CD4-positive, alpha-beta memory T cell (primary cell): ENCODE measurements at regions of chr17 and their contacts with region 1.

Region 1: GRCh38 chr17:50853015-50853615 is 13.0 kb downstream of the TOB1 start:
- DNase-seq: no peak
- H3K4me3 ChIP-seq: no peak overlapping the region
- H3K4me3 Mint-ChIP-seq: peak overlapping the region in 6 of 8 donors; percentile 70 to 87 (median 84)
- H3K27ac ChIP-seq: no peak overlapping the region
- H3K27ac Mint-ChIP-seq: peak overlapping the region; percentile 47 to 97 (median 92)
- H3K4me1 ChIP-seq: peaks cover 15% of the 10 kb centered on the region
- H3K4me1 Mint-ChIP-seq: peaks cover 12 to 20% (median 15%) of the 10 kb centered on the region in 4 donors
- H3K27me3 ChIP-seq: no peaks in the 10 kb centered on the region
- H3K27me3 Mint-ChIP-seq: no peaks in the 10 kb centered on the region

Region 2: DNA sequence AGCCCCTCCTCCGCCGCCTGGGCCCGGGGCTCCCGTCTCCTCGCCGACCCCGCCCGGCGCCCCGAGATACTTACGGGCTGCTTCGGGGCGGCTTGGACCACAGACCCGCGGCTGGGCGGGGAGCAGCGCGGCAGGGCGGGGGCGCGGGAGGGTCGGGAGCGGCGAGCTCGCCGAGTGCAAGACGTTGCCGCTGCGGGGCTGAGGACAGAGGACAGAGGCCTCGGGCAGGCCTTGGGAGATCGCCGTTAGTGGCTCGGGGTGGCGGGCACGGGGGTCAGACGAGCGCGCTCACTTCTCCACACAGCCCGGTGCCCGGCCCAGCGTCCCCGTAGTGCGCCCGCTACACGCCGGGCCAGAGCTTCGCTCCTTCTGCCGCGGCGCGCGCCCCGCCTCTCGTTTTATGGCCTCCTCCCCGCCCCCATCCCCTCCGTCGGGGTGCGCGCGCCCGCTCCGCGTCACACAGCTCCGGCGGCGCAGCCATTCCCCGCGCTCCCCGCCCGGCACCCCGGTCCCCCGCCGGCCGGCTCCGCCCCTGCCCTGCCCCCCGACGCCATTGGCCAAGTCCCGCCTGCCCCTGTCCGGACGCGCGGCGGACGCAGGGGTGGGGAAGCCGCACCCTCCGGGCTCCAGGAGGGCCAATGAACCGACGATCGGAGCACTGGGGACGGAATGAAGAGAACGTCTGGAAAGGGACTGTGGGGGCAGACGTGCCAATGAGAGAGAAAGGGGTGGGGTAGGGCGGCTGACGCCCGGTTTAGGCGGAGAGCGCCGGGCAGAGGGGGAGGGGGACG is 13.1 kb after region 1 on chr17 and contains the start of gene TOB1:
- CTCF ChIA-PET with region 1: interaction called, 102 read pairs
- POLR2A ChIA-PET with region 1: interaction called, 218 read pairs
- intact Hi-C with region 1: loop called (anchors 1 kb)
- DNase-seq: peak; percentile 94 to 97 (median 95)
- H3K4me3 ChIP-seq: peak within 1 kb of the TSS; percentile 87 to 92
- H3K4me3 Mint-ChIP-seq: peak within 1 kb of the TSS; percentile 97 to 100 (median 98)
- H3K27ac ChIP-seq: peak within 1 kb of the TSS; percentile 97
- H3K27ac Mint-ChIP-seq: peak within 1 kb of the TSS; percentile 96 to 100 (median 99)
- H3K4me1 ChIP-seq: peaks cover 67% of the 10 kb centered on the region
- H3K4me1 Mint-ChIP-seq: peaks cover 38 to 73% (median 51%) of the 10 kb centered on the region in 4 donors
- H3K27me3 ChIP-seq: no peaks in the 10 kb centered on the region
- H3K27me3 Mint-ChIP-seq: no peaks in the 10 kb centered on the region
- total RNA-seq, gene TOB1: 93.7 to 104 TPM

Region 3: DNA sequence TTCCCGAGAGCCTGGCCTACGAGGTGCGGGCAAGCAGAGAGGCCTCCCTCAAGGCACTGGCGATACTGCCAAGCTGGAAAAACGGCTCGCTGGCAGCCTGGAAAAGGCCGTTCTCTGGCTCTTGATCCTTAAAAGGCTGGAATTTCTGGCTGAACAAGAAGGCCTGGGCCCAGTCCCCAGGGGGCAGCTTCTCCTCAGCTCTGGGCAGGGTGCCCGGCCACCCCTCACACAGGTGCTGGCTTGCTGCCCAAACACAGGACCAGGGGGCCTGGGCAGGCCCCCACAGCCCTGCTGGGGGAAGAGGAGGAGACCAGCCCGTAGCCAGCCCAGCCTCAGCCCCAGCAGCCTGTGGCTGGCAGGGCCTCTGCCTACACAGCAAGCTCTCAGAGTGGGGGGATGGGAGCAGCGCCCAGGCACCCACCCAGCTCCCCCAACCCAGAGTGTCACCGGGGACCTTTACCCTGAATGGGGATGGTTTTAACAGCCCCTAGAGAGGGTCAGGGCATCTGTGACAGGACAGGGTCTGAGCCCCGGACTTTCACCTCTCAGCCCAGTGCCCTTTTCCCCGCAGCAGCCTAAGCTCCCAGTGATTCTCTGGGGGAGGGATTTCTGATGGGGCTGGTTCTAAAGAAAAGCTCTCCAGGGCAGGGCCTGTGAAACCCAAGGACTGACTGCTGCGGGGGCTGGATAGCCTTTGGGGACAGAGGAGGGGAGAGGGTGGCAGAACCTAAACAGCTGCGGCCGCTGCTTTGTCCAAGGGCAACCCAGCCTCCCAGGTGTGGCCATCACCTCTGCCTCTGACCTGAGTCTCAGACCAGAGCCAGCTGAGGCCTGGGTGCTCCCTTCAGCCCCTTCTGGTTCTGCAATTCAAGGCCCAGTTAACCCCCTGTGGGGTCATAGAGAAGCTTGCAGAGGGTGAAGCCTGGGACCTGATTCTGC is 51.7 kb after region 1 on chr17:
- CTCF ChIA-PET with region 1: interaction called, 14 read pairs
- POLR2A ChIA-PET with region 1: interaction called, 688 read pairs
- intact Hi-C with region 1: no loop called
- DNase-seq: no peak
- H3K4me3 ChIP-seq: no peak overlapping the region
- H3K4me3 Mint-ChIP-seq: peak overlapping the region in 4 of 8 donors; percentile 22 to 79 (median 65)
- H3K27ac ChIP-seq: peak overlapping the region; percentile 66
- H3K27ac Mint-ChIP-seq: peak overlapping the region; percentile 71 to 97 (median 96)
- H3K4me1 ChIP-seq: peaks cover 66% of the 10 kb centered on the region
- H3K4me1 Mint-ChIP-seq: peaks cover 39 to 72% (median 51%) of the 10 kb centered on the region in 4 donors
- H3K27me3 ChIP-seq: no peaks in the 10 kb centered on the region
- H3K27me3 Mint-ChIP-seq: no peaks in the 10 kb centered on the region

Region 4: GRCh38 chr17:50925296-50925891 is 72.3 kb after region 1 on chr17:
- CTCF ChIA-PET with region 1: interaction called, 14 read pairs
- POLR2A ChIA-PET with region 1: interaction called, 688 read pairs
- intact Hi-C with region 1: no loop called
- DNase-seq: no peak
- H3K4me3 ChIP-seq: no peak overlapping the region
- H3K4me3 Mint-ChIP-seq: no peak overlapping the region
- H3K27ac ChIP-seq: no peak overlapping the region
- H3K27ac Mint-ChIP-seq: peak overlapping the region in 4 of 7 donors; percentile 42 to 73 (median 62)
- H3K4me1 ChIP-seq: peaks cover 27% of the 10 kb centered on the region
- H3K4me1 Mint-ChIP-seq: peaks cover 11 to 66% (median 34%) of the 10 kb centered on the region in 4 donors
- H3K27me3 ChIP-seq: no peaks in the 10 kb centered on the region
- H3K27me3 Mint-ChIP-seq: no peaks in the 10 kb centered on the region

Region 5: DNA sequence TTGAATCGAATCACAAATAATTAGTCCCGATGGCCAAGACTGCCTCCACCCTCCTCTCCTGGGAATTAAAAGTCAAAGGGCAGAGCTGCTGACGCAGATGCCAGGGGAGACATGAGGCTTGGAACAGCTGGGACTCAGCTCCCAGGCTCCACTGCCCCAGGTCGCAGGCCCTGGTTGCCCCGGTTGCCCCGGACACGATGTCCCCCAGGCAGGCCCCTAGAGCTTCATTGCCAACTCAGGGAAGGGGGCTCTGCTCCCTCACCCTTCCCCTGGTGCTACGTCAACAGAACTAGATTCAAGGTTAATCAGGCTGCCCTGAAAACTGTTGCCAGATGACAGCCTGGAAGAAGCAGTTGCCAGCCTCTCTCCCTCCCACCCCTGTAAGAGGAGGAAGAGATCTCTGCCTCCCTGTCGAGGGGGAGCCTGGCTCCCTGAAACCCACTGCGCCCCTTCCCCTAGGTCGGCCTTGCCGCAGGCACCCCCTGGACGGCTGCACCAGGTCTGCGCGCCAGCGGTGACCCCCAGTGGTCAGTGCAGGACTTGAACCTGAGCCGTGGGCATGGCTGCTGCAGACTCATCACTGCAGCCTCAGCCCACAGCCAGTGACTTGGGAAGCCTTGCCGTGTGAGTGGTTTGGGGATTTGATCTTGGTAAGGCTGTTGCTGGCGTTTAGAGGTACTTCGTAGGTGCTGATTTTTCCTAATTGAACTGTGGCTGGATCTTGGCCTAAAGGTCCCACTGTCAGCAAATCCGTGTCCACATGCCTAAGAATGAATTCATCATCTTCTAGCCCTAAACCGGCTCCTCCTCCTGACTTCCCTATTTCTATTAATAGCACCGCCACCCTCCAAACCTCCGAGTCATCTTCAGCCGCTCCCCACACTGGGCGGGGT is 97.1 kb after region 1 on chr17:
- CTCF ChIA-PET with region 1: interaction called, 515 read pairs
- POLR2A ChIA-PET with region 1: interaction called, 673 read pairs
- intact Hi-C with region 1: loop called (anchors 1 kb)
- DNase-seq: peak in 4 of 5 donors; percentile 39 to 66 (median 44)
- H3K4me3 ChIP-seq: no peak overlapping the region
- H3K4me3 Mint-ChIP-seq: peak overlapping the region in 2 of 8 donors; percentile 25 to 35
- H3K27ac ChIP-seq: no peak overlapping the region
- H3K27ac Mint-ChIP-seq: peak overlapping the region in 4 of 7 donors; percentile 39 to 72 (median 58)
- H3K4me1 ChIP-seq: peaks cover 20% of the 10 kb centered on the region
- H3K4me1 Mint-ChIP-seq: peaks cover 16 to 39% (median 25%) of the 10 kb centered on the region in 4 donors
- H3K27me3 ChIP-seq: no peaks in the 10 kb centered on the region
- H3K27me3 Mint-ChIP-seq: peaks cover 0 to 2% of the 10 kb centered on the region in 2 donors

Region 6: DNA sequence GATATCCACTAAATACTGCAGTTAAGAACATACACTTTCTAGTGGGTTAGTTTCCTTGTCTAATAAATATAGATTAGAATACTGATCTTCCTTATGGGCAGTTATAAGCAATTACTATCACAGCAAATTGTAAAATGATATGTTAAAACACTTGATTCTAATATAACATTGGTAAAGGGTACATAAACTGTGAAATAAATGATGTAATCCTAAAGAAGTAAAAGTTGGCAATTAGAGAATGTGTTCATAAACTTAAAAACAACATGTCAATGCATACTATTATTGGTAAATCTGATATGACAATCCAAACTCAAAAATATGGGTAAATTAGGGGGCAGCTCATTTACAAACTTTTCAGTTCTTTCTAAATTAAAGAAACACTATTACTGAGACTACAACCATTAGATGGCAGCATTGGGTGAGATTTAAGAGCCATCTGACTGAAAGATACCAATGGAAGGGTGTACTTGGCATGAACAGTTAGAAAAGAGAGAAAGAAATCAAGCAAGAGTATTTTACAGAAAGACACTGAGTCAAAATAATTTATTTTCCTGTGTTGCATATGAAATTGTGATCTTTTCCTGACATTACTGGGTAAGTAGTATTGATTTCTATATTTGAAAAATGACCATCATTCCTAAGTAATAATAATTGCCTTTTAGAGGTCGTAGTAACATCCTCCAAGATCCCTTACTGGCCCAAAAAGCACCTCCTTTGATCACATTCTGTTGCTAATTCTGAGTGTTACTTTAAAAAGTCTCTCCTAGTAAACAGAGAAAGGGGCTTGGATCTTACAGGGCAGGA is 147.9 kb after region 1 on chr17:
- CTCF ChIA-PET with region 1: interaction called, 11 read pairs
- POLR2A ChIA-PET with region 1: no interaction called
- intact Hi-C with region 1: no loop called
- DNase-seq: peak in 4 of 5 donors; percentile 62 to 68 (median 66)
- H3K4me3 ChIP-seq: no peak overlapping the region
- H3K4me3 Mint-ChIP-seq: no peak overlapping the region
- H3K27ac ChIP-seq: no peak overlapping the region
- H3K27ac Mint-ChIP-seq: peak overlapping the region in 2 of 7 donors; percentile 2 to 23
- H3K4me1 ChIP-seq: no peaks in the 10 kb centered on the region
- H3K4me1 Mint-ChIP-seq: peaks cover 0 to 3% (median 1%) of the 10 kb centered on the region in 4 donors
- H3K27me3 ChIP-seq: no peaks in the 10 kb centered on the region
- H3K27me3 Mint-ChIP-seq: no peaks in the 10 kb centered on the region

Region 7: GRCh38 chr17:51018541-51018940 is 165.4 kb after region 1 on chr17:
- CTCF ChIA-PET with region 1: no interaction called
- POLR2A ChIA-PET with region 1: no interaction called
- intact Hi-C with region 1: no loop called
- DNase-seq: no peak
- H3K4me3 ChIP-seq: no peak overlapping the region
- H3K4me3 Mint-ChIP-seq: no peak overlapping the region
- H3K27ac ChIP-seq: no peak overlapping the region
- H3K27ac Mint-ChIP-seq: peak overlapping the region in 2 of 7 donors; percentile 17 to 37
- H3K4me1 ChIP-seq: no peaks in the 10 kb centered on the region
- H3K4me1 Mint-ChIP-seq: peaks cover 0 to 5% (median under 1%) of the 10 kb centered on the region in 4 donors
- H3K27me3 ChIP-seq: no peaks in the 10 kb centered on the region
- H3K27me3 Mint-ChIP-seq: no peaks in the 10 kb centered on the region